Psoas muscle (tissue), 8 donors: ENCODE measurements at regions of chr17 and their contacts with region 1.

Region 1: GRCh38 chr17:40399185-40399584 is 18.5 kb downstream of the TOP2A start:
- DNase-seq: no peak
- ATAC-seq: peak in 3 of 4 donors; percentile 44 to 63 (median 59)
- H3K4me3 ChIP-seq: no peak overlapping the region
- H3K27ac ChIP-seq: no peak overlapping the region
- H3K4me1 ChIP-seq: no peaks in the 10 kb centered on the region
- H3K27me3 ChIP-seq: no peaks in the 10 kb centered on the region
- CTCF ChIP-seq: peak; percentile 68

Region 2: DNA sequence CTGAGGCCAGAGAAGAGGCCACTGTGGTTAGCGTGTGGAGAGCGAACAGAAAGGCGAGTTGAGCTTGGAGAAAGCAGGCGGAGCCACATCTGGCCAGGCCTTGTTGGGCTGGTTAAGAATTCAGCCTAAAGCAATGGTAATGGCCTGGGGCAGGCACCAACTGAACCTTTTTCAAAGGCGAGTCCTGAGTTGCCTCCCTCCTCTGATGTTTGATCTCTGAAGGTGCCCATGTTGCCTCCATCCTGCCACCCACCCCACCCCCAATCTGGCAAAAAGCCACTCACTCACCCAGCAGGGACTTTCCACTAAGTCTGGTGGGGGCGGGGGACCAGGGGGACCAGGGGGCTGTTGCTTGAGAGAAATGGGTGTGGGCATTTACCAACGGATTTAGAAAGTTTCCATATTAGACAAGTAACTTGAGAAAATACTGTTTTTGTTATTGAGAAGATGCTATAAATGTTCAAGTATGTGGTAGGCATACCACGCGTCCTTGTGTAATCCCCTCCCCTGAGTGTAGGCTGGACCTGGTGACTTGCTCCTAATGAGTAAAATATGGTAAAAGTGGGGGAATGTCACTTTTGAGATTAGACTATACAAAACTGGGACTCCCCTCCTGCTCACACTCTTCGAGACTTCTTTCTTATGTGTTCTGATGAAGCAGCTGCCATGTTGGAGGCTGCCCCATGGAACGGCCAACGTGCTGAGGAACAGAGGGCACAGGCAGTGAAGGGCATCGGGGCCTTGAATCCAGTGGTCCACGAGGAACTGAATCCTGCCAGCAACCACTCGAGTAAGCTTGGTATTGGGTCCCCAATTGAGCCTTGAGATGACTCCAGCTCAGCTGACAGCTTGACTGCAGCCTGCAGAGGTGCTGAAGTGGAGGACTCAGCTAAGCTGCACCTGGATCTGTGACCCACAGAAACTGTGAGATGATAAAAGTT is 132.1 kb after region 1 on chr17:
- intact Hi-C with region 1: loop called (anchors 2 to 5 kb)
- DNase-seq: no peak
- ATAC-seq: no peak
- H3K4me3 ChIP-seq: no peak overlapping the region
- H3K27ac ChIP-seq: no peak overlapping the region
- H3K4me1 ChIP-seq: peaks cover 5% of the 10 kb centered on the region
- H3K27me3 ChIP-seq: no peaks in the 10 kb centered on the region
- CTCF ChIP-seq: no peak

Region 3: DNA sequence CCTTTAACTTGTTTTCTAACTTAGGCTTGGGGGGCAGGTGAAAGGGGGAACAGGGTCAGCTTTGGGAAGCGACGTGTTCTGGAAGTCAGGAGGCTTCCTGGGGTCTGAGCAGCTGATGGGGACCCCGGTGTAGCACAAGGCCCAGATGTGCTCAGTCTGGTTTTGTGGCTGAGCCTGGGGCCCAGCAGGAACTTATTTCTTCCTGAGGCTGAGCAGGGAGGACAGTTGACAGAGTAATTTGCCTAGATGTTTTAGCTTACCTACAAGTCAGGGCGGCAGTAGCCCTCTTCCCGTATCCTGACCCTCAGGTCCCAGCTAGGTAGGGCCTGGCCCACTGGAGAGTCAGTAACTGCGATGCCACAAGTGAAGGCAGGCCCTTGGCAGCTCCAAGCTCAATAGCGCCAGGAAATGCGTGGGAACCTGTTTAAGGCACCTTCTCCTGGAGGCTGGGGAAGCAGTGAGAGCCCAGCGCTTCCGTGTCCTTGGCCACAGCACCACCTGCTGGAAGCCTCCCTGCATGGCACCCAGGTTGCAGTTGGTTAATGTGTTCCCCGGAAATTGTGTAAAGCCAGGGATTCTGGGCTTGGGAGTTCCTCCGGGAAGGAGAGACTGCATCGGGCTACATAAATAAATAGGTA is 160.9 kb after region 1 on chr17:
- intact Hi-C with region 1: loop called (anchors 2 to 5 kb)
- DNase-seq: peak; percentile 88 to 91
- ATAC-seq: peak; percentile 88 to 96 (median 92)
- H3K4me3 ChIP-seq: no peak overlapping the region
- H3K27ac ChIP-seq: peak overlapping the region; percentile 30
- H3K4me1 ChIP-seq: peaks cover 5% of the 10 kb centered on the region
- H3K27me3 ChIP-seq: peaks cover 0 to 15% (median 0%) of the 10 kb centered on the region in 3 donors
- CTCF ChIP-seq: peak; percentile 96

Region 4: GRCh38 chr17:40615295-40615988 is 216.3 kb after region 1 on chr17:
- intact Hi-C with region 1: no loop called
- DNase-seq: peak in 1 of 2 donors; percentile 71
- ATAC-seq: peak in 1 of 4 donors; percentile 46
- H3K4me3 ChIP-seq: no peak overlapping the region
- H3K27ac ChIP-seq: no peak overlapping the region
- H3K4me1 ChIP-seq: no peaks in the 10 kb centered on the region
- H3K27me3 ChIP-seq: peaks cover 0 to 36% (median 7%) of the 10 kb centered on the region in 3 donors
- CTCF ChIP-seq: peak; percentile 30